Transverse colon (tissue), 4 donors: ENCODE measurements at regions of chr3 and their contacts with region 1.

Region 1: GRCh38 chr3:104604369-104605010 is 762.2 kb upstream of the ALCAM start:
- DNase-seq: no peak
- H3K4me3 ChIP-seq: no peak overlapping the region
- H3K27ac ChIP-seq: no peak overlapping the region
- H3K4me1 ChIP-seq: no peaks in the 10 kb centered on the region
- H3K27me3 ChIP-seq: no peaks in the 10 kb centered on the region
- CTCF ChIP-seq: no peak
- EP300 ChIP-seq: no peak
- POLR2A ChIP-seq: no peak

Region 2: GRCh38 chr3:104428337-104428925 is 176.1 kb before region 1 on chr3:
- in situ Hi-C with region 1: no loop called
- intact Hi-C with region 1: no loop called
- DNase-seq: no peak
- H3K4me3 ChIP-seq: no peak overlapping the region
- H3K27ac ChIP-seq: no peak overlapping the region
- H3K4me1 ChIP-seq: no peaks in the 10 kb centered on the region
- H3K27me3 ChIP-seq: no peaks in the 10 kb centered on the region
- CTCF ChIP-seq: no peak
- EP300 ChIP-seq: no peak
- POLR2A ChIP-seq: no peak

Region 3: GRCh38 chr3:105366326-105367062 is 762.0 kb after region 1 on chr3 and contains the start of gene ALCAM:
- in situ Hi-C with region 1: loop called in 1 of 4 experiments (anchors 25 kb)
- intact Hi-C with region 1: no loop called
- DNase-seq: peak; percentile 93
- H3K4me3 ChIP-seq: peak within 1 kb of the TSS; percentile 54 to 78 (median 60)
- H3K27ac ChIP-seq: peak within 1 kb of the TSS; percentile 83 to 91 (median 89)
- H3K4me1 ChIP-seq: peaks cover 0 to 42% (median 23%) of the 10 kb centered on the region in 4 donors
- H3K27me3 ChIP-seq: peaks cover 12% of the 10 kb centered on the region
- CTCF ChIP-seq: peak; percentile 22 to 51 (median 35)
- EP300 ChIP-seq: no peak
- POLR2A ChIP-seq: peak; percentile 87
- total RNA-seq, gene ALCAM: 9.4 to 25.9 (median 16.6) TPM